ENCODE measurements at regions of chr2 and their contacts with region 1.

Region 1: GRCh38 chr2:202265467-202266277 is at the start of gene NOP58:
- DNase-seq: peak; percentile 69 to 96 (median 93)
- ATAC-seq: peak; percentile 90
- H3K4me3 ChIP-seq: peak within 1 kb of the TSS; percentile 93
- H3K4me3 Mint-ChIP-seq: peak within 1 kb of the TSS in 9 of 10 donors; percentile 53 to 71 (median 64)
- H3K27ac ChIP-seq: peak within 1 kb of the TSS; percentile 92
- H3K27ac Mint-ChIP-seq: peak within 1 kb of the TSS in 6 of 9 donors; percentile 4 to 83 (median 76)
- H3K4me1 ChIP-seq: peaks cover 17 to 34% of the 10 kb centered on the region in 2 donors
- H3K4me1 Mint-ChIP-seq: peaks cover 11 to 27% (median 21%) of the 10 kb centered on the region in 7 donors
- H3K27me3 ChIP-seq: no peaks in the 10 kb centered on the region
- H3K27me3 Mint-ChIP-seq: no peaks in the 10 kb centered on the region
- total RNA-seq, gene NOP58: 105 to 259 (median 110) TPM

Region 2: DNA sequence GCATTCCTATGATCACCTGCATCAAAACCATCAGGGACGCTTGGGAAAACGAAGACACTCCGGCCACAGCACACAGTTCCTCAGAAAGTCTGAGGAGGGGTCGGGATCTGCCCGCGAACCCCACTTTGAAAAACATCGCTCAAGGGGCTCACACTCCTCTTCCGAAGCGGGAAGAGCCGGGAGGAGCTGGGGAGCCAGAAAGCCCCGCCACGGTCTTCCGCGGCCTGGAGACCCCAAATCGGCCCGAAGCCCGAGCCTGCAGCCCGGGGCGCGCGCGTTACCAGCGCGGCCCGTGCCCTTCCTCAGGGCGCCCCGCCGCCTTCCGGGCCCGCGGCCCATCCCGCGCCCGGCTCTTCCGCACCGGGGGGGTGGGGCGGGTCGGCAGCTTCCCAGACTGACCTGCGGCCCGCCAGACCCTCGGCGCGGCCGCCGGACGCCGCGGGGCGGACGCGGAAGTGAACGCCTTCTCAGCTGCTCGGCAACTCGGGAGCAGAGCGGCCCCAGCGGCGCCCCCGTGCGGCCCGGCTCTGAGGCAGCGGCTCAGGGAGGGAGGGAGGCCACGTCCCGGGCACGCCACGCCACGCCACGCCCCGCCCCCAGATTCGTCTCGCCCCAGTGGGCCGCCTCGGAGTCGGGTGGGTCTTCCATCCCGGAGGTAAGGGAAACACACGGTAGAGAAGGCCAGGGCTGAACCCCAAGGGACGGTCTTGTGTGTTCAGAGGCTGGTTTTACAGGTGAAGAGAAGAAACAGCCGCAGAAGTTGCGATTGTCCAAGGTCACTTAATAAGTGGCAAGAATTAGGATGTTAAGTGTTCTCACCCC is 1755.8 kb before region 1 on chr2 and contains the start of gene KCTD18:
- CTCF ChIA-PET with region 1: no interaction called
- POLR2A ChIA-PET with region 1: no interaction called
- intact Hi-C with region 1: loop called in 1 of 2 experiments (anchors 10 kb)
- DNase-seq: peak; percentile 82 to 93 (median 87)
- ATAC-seq: peak; percentile 100
- H3K4me3 ChIP-seq: peak within 1 kb of the TSS; percentile 53
- H3K4me3 Mint-ChIP-seq: peak within 1 kb of the TSS; percentile 83 to 98 (median 94)
- H3K27ac ChIP-seq: peak within 1 kb of the TSS; percentile 74
- H3K27ac Mint-ChIP-seq: peak within 1 kb of the TSS; percentile 88 to 97 (median 95)
- H3K4me1 ChIP-seq: peaks cover 6 to 22% of the 10 kb centered on the region in 2 donors
- H3K4me1 Mint-ChIP-seq: peaks cover 10 to 51% (median 34%) of the 10 kb centered on the region in 7 donors
- H3K27me3 ChIP-seq: no peaks in the 10 kb centered on the region
- H3K27me3 Mint-ChIP-seq: no peaks in the 10 kb centered on the region
- total RNA-seq, gene KCTD18: 14.9 to 20.8 (median 18.6) TPM

Region 3: DNA sequence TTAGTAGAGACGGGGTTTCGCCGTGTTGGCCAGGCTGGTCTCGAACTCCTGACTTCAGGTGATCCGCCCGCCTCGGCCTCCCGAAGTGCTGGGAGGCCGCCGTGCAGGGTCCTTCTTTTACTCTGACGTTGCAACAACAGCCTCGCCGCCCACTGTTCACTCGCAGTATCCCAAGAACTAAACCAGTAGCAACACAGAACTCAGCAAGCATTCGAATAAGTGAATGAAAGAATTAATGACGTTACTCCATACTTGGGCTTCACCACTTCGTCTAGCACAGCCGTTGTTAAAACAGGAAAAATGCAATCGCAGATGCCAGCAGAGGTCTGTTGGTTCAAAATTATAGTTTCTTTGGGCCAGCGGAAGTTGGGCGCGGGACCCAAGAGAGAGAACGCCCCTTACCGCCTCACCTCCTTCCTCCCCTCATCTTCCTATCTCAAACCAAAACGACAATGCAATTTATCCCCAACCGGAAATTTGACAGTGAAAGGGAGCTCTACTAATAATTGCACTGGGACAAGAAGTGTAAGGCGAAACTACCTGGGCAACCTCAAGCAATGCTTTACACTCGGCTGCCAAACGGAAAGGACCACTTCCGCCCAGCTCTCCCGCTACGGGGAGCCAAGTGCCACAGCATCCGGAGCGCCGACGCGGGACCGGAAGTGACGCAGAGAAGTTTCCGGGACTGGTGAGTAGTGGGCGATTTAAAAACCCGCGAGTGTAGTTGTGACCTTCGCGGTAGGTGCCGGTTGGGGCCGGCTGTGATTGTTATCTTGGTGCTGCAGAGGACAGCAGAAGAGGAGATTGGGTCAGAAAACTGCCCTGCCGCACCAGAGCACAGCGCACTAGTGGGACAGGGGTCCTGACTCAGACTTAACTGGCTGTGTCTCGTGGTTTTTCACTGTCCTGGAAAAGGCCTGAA is 1376.7 kb before region 1 on chr2 and contains the starts of genes NIF3L1 and PPIL3:
- CTCF ChIA-PET with region 1: no interaction called
- POLR2A ChIA-PET with region 1: no interaction called
- intact Hi-C with region 1: loop called in 1 of 2 experiments (anchors 1 kb)
- DNase-seq: peak; percentile 88 to 97 (median 95)
- ATAC-seq: peak; percentile 89
- H3K4me3 ChIP-seq: peak within 1 kb of the TSS; percentile 83
- H3K4me3 Mint-ChIP-seq: peak within 1 kb of the TSS; percentile 88 to 100 (median 96)
- H3K27ac ChIP-seq: peak within 1 kb of the TSS; percentile 86
- H3K27ac Mint-ChIP-seq: peak within 1 kb of the TSS; percentile 97 to 100 (median 100)
- H3K4me1 ChIP-seq: peaks cover 23 to 26% of the 10 kb centered on the region in 2 donors
- H3K4me1 Mint-ChIP-seq: peaks cover 35 to 75% (median 60%) of the 10 kb centered on the region in 7 donors
- H3K27me3 ChIP-seq: no peaks in the 10 kb centered on the region
- H3K27me3 Mint-ChIP-seq: no peaks in the 10 kb centered on the region
- total RNA-seq, gene NIF3L1: 11.5 to 33.9 (median 31.4) TPM
- total RNA-seq, gene PPIL3: 28.5 to 69.7 (median 49.1) TPM

Region 4: DNA sequence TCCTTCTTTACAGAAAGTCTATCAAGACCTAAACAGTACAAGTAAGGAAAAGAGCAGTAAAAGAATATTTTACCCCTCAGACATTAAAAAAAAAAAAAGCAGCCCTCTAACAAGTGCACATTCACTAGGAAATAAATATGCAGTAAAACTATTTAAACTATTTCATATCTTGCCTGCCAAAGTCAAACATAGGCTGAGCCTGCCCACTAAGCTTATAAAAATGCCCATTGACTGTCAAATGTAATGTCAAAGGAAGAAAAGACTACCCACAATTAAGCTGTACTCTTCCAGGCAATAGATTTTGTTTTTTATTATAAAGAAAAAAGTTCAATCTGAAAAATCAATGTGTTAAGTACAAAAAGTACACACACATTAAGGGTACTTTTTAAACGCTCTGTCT is 496.8 kb before region 1 on chr2:
- CTCF ChIA-PET with region 1: no interaction called
- POLR2A ChIA-PET with region 1: no interaction called
- intact Hi-C with region 1: no loop called
- DNase-seq: no peak
- ATAC-seq: no peak
- H3K4me3 ChIP-seq: no peak overlapping the region
- H3K4me3 Mint-ChIP-seq: no peak overlapping the region
- H3K27ac ChIP-seq: no peak overlapping the region
- H3K27ac Mint-ChIP-seq: no peak overlapping the region
- H3K4me1 ChIP-seq: no peaks in the 10 kb centered on the region
- H3K4me1 Mint-ChIP-seq: peaks cover 0 to 9% (median 0%) of the 10 kb centered on the region in 7 donors
- H3K27me3 ChIP-seq: no peaks in the 10 kb centered on the region
- H3K27me3 Mint-ChIP-seq: peaks cover 0 to 2% (median 0%) of the 10 kb centered on the region in 5 donors

Region 5: DNA sequence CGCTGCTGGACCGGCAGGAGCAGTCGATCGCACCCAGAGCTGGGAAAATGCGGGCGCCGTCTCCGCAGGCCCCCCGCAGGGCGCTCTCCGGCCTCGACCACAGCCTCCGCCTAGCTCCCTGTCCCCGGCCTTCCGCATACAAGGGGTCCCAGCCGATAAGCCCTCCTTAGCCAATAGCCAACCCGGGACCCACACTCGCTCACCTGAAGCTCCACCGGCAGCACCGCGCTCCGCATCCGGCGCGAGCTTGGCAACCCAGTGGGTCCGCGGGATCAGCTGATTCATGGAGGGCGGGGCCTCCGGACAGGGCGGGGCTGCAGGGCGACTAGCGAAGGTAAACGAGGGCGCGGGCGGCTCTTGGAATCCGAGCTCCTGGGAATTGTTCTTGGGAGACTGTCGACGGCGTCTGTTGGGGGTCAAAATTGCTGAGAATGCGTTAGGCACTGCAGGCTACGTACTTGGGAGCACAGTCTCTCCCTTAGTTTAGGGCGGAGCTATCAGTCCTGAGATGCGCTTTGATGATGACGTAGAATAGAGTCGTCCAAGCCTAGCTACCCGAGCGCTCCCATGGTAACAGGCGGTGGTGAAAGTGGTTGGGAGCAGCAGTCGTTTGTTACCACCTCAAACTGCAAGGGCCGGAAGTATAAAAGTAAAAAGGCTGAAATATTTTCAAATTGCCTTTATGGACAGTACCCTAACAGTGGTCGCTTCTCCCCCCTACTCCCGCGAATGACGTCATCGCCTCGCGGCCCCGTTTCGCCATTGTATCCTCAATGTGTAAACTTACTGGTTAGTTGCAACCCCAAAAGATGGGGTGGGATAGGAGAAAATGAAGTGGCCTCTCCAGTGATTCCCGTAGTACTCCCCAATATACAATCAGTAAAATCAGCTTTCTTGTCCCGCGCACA is 484.7 kb before region 1 on chr2 and contains the start of gene ALS2:
- CTCF ChIA-PET with region 1: no interaction called
- POLR2A ChIA-PET with region 1: interaction called, 4 read pairs
- intact Hi-C with region 1: loop called (anchors 1 to 2 kb)
- DNase-seq: peak; percentile 91 to 97 (median 95)
- ATAC-seq: peak; percentile 96
- H3K4me3 ChIP-seq: peak within 1 kb of the TSS; percentile 96
- H3K4me3 Mint-ChIP-seq: peak within 1 kb of the TSS; percentile 87 to 99 (median 98)
- H3K27ac ChIP-seq: peak within 1 kb of the TSS; percentile 84
- H3K27ac Mint-ChIP-seq: peak within 1 kb of the TSS; percentile 84 to 99 (median 97)
- H3K4me1 ChIP-seq: peaks cover 7 to 10% of the 10 kb centered on the region in 2 donors
- H3K4me1 Mint-ChIP-seq: peaks cover 5 to 36% (median 21%) of the 10 kb centered on the region in 7 donors
- H3K27me3 ChIP-seq: no peaks in the 10 kb centered on the region
- H3K27me3 Mint-ChIP-seq: peaks cover 0 to 22% (median 0%) of the 10 kb centered on the region in 5 donors
- total RNA-seq, gene ALS2: 8.9 to 13.5 (median 10.7) TPM

Region 6: DNA sequence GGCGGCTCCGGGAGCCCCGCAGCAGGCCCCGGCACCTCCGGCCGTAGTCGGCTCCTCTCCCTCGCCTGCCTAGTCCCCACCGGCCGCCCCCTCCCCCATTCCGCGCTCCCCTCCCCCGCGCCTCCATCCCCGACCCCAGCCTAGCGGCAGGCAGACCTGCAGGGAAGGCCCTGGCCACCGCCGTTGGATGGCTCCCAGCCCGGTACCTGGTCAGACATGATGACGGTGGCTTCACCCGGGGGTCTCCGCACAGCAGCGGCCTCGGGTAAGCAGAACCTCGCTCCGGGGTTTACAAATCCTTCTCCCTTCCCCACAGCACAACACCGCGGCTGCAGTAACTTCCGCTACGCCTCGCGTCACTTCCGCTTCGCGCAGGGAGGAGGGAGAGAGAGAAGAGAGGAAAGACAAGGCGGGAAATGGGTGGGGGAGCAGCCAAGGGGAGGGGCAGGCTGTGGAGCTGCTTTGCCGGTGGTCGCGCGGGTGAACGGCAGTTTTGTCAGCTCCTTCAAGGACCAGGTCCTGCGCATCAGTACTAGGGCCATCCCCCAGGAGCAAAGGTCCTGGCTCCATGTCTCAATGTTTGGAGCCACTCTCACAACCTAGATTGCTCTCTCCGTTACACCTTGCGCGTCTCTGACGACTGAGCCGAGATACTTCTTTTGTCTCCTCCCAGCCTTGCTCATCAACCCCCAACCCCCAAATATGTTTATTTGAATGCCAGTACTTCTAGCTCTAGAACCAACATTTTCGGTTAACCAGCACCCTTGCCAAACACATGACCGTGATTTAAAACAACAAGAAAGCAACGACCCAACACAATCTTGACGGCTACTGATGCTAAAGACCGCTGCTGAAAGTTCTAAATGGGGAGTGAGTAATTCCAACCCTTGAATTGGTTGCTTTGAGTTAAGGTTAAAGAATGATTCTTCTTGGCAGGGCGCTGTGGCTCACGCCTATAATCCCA is 27.2 kb before region 1 on chr2 and contains the start of gene SUMO1:
- CTCF ChIA-PET with region 1: no interaction called
- POLR2A ChIA-PET with region 1: interaction called, 3 read pairs
- intact Hi-C with region 1: loop called (anchors 1 kb)
- DNase-seq: peak; percentile 80 to 95 (median 93)
- ATAC-seq: peak; percentile 98
- H3K4me3 ChIP-seq: peak within 1 kb of the TSS; percentile 82
- H3K4me3 Mint-ChIP-seq: peak within 1 kb of the TSS; percentile 91 to 100 (median 97)
- H3K27ac ChIP-seq: peak within 1 kb of the TSS; percentile 88
- H3K27ac Mint-ChIP-seq: peak within 1 kb of the TSS; percentile 96 to 99 (median 97)
- H3K4me1 ChIP-seq: peaks cover 11% of the 10 kb centered on the region in 2 donors
- H3K4me1 Mint-ChIP-seq: peaks cover 10 to 51% (median 35%) of the 10 kb centered on the region in 7 donors
- H3K27me3 ChIP-seq: no peaks in the 10 kb centered on the region
- H3K27me3 Mint-ChIP-seq: peaks cover 0 to 2% (median 0%) of the 10 kb centered on the region in 5 donors
- total RNA-seq, gene SUMO1: 48.1 to 104 (median 56.8) TPM

Region 7: DNA sequence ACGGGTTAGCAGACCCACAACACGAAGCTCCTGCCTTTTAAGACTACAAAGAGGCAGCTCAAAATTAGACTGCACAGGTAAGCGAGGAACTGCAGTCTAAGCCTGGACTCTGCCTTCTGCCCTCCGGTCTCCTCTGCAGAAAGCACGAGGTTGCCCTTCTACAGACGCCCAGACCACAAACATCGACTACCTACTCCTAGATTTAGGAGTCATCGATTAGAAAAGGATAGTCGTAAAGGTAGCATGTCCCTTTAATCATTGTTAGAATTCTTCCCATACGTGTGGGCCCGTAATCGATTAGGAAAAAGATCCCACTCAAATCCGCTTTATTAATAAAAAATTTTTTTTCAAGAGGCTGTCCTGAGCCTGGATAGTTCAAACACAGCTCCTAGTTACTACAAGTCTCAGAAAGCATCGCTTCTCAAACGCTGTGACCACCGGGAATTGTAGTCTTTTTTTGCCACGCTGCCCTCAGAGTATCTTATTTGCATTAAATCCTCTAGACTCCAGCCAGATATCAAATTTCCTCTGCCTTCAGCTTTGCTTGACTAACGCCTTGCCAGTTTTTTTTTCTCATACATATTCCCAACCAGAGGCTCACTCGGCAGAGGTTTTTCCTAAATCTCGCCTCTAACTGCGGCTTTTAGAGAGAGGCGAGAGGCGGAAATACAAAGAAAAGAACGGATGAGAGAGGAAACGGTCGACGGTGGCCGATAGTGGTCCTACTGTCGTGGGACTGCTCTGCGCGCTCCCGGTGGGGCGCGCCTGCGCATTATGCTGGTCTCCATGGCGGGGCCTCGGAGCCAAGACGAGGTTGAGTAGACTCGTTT is 646.1 kb after region 1 on chr2 and contains the starts of genes CARF and WDR12:
- CTCF ChIA-PET with region 1: no interaction called
- POLR2A ChIA-PET with region 1: no interaction called
- intact Hi-C with region 1: loop called (anchors 1 to 2 kb)
- DNase-seq: peak; percentile 81 to 93 (median 89)
- ATAC-seq: peak; percentile 93
- H3K4me3 ChIP-seq: peak within 1 kb of the TSS; percentile 82
- H3K4me3 Mint-ChIP-seq: peak within 1 kb of the TSS; percentile 90 to 100 (median 98)
- H3K27ac ChIP-seq: peak within 1 kb of the TSS; percentile 79
- H3K27ac Mint-ChIP-seq: peak within 1 kb of the TSS; percentile 93 to 99 (median 97)
- H3K4me1 ChIP-seq: peaks cover 4 to 11% of the 10 kb centered on the region in 2 donors
- H3K4me1 Mint-ChIP-seq: peaks cover 24 to 50% (median 34%) of the 10 kb centered on the region in 7 donors
- H3K27me3 ChIP-seq: no peaks in the 10 kb centered on the region
- H3K27me3 Mint-ChIP-seq: no peaks in the 10 kb centered on the region
- total RNA-seq, gene CARF: 10.2 to 31.2 (median 15.4) TPM
- total RNA-seq, gene WDR12: 17.2 to 50.4 (median 20.8) TPM

Measured in naive thymus-derived CD4-positive, alpha-beta T cell (primary cell).